Panc1 (cell line): ENCODE measurements at regions of chr7 and their contacts with region 1.

Region 1: GRCh38 chr7:32495298-32496176 is at the start of gene AVL9:
- DNase-seq: peak; percentile 79
- ATAC-seq: peak; percentile 99
- H3K4me3 ChIP-seq: peak within 1 kb of the TSS; percentile 79 to 98
- H3K27ac ChIP-seq: peak within 1 kb of the TSS; percentile 98
- H3K4me1 ChIP-seq: peaks cover 7% of the 10 kb centered on the region
- H3K27me3 ChIP-seq: no peaks in the 10 kb centered on the region
- CTCF ChIP-seq: no peak
- total RNA-seq, gene AVL9: 66.6 TPM

Region 2: DNA sequence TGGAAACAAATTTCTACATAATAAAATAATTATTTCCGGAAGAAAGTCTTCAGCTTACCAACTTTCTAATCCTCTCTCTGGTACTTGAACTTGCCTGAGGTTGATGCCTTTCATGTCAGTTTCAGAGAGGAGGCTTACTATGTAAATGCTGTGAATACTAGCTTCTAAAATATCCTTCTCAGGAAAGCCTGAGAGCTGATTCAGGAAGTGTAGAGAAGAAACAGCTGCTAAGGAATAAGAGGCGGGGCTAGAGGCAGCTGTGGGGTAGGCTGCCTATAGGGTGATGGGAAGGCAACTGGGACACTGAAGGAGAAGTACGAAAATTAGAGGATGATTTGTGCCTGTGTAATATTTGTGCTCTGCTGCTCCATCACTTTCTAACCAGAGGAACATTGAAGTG is 69.0 kb after region 1 on chr7:
- CTCF ChIA-PET with region 1: interaction called, 6 read pairs
- POLR2A ChIA-PET with region 1: interaction called, 7 read pairs
- in situ Hi-C with region 1: no loop called
- intact Hi-C with region 1: loop called (anchors 10 kb)
- DNase-seq: no peak
- ATAC-seq: no peak
- H3K4me3 ChIP-seq: no peak overlapping the region
- H3K27ac ChIP-seq: no peak overlapping the region
- H3K4me1 ChIP-seq: no peaks in the 10 kb centered on the region
- H3K27me3 ChIP-seq: no peaks in the 10 kb centered on the region
- CTCF ChIP-seq: no peak

Region 3: GRCh38 chr7:32660936-32661335 is 165.4 kb after region 1 on chr7:
- CTCF ChIA-PET with region 1: no interaction called
- POLR2A ChIA-PET with region 1: no interaction called
- in situ Hi-C with region 1: no loop called
- intact Hi-C with region 1: loop called (anchors 10 kb)
- DNase-seq: no peak
- ATAC-seq: no peak
- H3K4me3 ChIP-seq: no peak overlapping the region
- H3K27ac ChIP-seq: peak overlapping the region; percentile 39; the same call in 1 of the 2 replicates
- H3K4me1 ChIP-seq: peaks cover 9% of the 10 kb centered on the region
- H3K27me3 ChIP-seq: no peaks in the 10 kb centered on the region
- CTCF ChIP-seq: no peak